ENCODE measurements at regions of chr18 and their contacts with region 1.

Region 1: DNA sequence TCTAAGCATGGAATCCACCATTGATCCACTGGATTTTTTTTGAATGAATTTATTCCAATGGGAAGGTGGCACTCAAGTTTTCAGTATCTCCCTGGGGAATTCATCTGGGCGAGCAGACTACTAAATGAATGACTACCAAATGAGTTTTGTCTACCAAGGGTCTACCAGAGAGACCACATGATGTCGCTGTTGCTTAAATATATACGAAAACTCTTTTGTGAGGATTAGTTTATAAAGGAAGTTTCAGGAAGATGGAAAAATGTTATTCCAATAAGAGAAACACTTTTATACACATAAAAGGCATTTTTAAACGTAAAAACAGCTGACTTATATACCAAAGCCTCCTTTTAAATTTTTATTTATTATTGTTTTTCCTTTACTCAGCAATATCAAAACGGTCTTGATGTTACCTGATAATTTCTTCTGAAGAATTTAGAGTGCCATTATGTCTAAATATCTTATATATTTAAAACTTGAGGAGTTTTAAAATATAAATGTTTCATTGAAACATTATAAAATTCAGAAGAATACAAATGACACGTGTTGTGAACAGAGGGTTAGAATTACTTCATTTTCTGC is 139.7 kb downstream of the HRH4 start:
- DNase-seq: peak; percentile 22
- H3K4me3 Mint-ChIP-seq: no peak overlapping the region
- H3K27ac Mint-ChIP-seq: no peak overlapping the region
- H3K4me1 Mint-ChIP-seq: no peaks in the 10 kb centered on the region
- H3K27me3 Mint-ChIP-seq: peaks cover 92% of the 10 kb centered on the region
- CTCF ChIP-seq: peak; percentile 39

Region 2: GRCh38 chr18:24553571-24554285 is 46.4 kb before region 1 on chr18:
- CTCF ChIA-PET with region 1: no interaction called
- intact Hi-C with region 1: loop called (anchors 5 kb)
- DNase-seq: no peak
- H3K4me3 Mint-ChIP-seq: no peak overlapping the region
- H3K27ac Mint-ChIP-seq: no peak overlapping the region
- H3K4me1 Mint-ChIP-seq: peaks cover 24% of the 10 kb centered on the region
- H3K27me3 Mint-ChIP-seq: peaks cover 29% of the 10 kb centered on the region
- CTCF ChIP-seq: no peak

Region 3: GRCh38 chr18:24672165-24672941 is 72.2 kb after region 1 on chr18:
- CTCF ChIA-PET with region 1: no interaction called
- intact Hi-C with region 1: loop called (anchors 5 kb)
- DNase-seq: no peak
- H3K4me3 Mint-ChIP-seq: no peak overlapping the region
- H3K27ac Mint-ChIP-seq: no peak overlapping the region
- H3K4me1 Mint-ChIP-seq: no peaks in the 10 kb centered on the region
- H3K27me3 Mint-ChIP-seq: peaks cover 98% of the 10 kb centered on the region
- CTCF ChIP-seq: no peak

Measured in Calu3 (cell line).